ENCODE measurements at regions of chr5 and their contacts with region 1.

Region 1: DNA sequence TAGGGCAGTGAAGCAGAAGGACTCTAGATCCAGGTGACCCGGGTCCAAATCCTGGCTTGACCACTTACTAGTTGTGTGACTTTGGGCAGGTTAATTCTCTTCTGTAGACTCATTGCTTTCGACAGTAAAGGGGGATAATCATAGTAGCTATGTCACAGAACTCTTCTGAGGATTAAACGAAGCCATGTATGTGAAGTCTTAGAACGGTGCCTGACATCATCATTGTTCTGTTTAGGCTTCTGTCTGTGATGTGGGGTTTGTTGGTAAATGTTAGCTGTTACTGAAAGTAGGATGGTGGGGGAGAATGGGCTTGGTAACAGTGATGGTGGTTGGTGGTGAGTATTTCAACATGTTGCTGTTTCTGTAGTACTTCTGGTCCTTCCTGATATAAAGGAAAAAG is 73.7 kb downstream of the MAP1B start:
- DNase-seq: no peak
- H3K4me3 ChIP-seq: no peak overlapping the region
- H3K27ac ChIP-seq: no peak overlapping the region
- H3K4me1 ChIP-seq: no peaks in the 10 kb centered on the region
- CTCF ChIP-seq: no peak

Region 2: GRCh38 chr5:72064801-72065570 is 115.9 kb before region 1 on chr5:
- CTCF ChIA-PET with region 1: no interaction called
- POLR2A ChIA-PET with region 1: interaction called, 11 read pairs
- intact Hi-C with region 1: no loop called
- DNase-seq: no peak
- H3K4me3 ChIP-seq: no peak overlapping the region
- H3K27ac ChIP-seq: no peak overlapping the region
- H3K4me1 ChIP-seq: no peaks in the 10 kb centered on the region
- CTCF ChIP-seq: no peak

Region 3: DNA sequence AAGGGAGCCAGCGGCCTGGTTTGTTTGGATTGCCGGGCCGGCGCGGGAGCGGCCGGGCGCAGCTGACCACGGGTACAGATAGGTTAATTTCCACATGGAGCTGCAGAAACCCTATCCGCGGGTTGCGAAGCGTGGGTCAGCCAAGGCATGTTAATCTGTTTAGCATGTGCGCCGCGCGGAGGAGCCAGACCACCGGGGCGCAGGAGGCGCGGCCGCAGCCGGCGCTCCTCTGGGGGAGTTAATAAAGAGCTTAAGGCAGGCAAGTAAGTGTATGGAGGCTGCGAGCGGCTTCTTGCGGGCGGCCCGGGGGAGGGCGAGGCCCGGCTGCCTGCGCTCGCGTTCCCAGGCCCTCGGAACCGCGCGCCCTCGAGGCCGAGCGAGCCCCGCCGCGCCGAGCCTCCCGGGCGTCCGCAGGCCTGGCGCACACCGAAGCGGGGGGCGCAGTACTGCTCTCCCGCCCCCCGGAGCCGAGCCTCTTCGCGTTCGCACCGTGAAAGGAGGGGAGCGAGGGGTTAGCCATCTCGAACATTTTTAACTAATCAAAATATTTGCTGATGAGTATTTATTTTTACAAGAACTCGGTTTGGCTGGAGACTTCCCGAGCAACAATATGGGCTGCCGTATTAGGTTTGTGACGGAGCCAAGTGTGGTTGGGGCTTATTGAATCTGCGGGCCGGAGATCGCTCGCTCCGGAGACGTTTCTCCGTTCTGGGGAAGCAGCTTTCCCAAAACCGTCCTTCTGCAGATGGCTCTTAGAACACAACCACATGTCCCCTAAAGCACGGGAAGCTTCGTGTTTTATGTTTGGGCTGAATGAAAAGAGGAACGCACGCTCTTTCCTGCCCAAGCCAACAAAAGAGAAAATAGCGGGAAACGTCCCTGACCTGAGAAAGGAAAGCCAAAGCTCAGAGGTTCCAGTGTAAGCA is 1238.8 kb after region 1 on chr5:
- CTCF ChIA-PET with region 1: no interaction called
- POLR2A ChIA-PET with region 1: no interaction called
- intact Hi-C with region 1: no loop called
- DNase-seq: no peak
- H3K4me3 ChIP-seq: no peak overlapping the region
- H3K27ac ChIP-seq: no peak overlapping the region
- H3K4me1 ChIP-seq: no peaks in the 10 kb centered on the region
- CTCF ChIP-seq: no peak